GM23248 (cell line): ENCODE measurements at regions of chr2 and their contacts with region 1.

Region 1: DNA sequence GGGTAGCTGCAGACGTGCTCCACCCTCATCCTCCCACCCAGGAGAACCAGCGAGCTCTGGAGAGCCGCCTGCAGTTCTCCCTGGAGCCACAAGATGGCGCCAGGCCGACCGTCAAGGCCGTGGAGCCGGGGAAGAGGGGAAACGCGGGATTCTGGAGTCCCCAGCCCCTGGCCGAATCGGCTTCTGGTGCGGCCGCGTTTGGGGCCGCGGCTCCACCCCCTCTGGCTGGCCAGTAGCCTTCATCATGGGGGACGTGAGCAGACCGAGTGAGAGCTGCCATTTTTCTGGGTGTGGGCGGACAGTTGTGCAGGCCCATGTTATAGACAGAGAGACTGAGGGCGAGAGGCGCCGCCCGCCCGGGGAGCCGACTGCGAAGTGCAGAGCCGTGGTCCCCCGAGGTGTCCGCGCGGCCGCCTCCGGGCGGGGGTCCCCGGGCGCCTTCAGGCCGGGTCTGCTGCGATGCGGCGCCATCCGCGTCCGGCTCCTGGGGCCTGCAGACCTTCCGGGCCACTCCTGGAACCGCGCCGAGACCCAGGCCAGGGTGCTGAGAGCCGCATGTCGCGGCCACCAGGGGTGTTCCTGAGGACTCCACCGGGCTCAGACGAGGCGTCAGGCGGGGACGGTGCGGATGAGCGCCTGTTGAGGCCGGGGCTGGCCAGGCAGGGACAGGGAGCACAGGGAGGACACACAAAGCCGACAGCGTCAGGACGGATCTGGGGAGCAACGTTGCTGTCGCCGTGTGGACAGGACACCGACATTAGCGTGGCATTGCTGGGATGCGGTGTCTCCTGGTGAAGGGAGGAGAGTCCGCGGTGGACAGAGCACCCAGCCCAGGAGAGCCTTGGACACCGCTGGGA is 418.2 kb upstream of the HS6ST1 start:
- DNase-seq: peak; percentile 75
- H3K4me3 ChIP-seq: peak overlapping the region; percentile 55
- H3K27ac ChIP-seq: no peak overlapping the region
- H3K4me1 ChIP-seq: peaks cover 6% of the 10 kb centered on the region
- H3K27me3 ChIP-seq: no peaks in the 10 kb centered on the region; the same call in none of the 2 replicates

Region 2: DNA sequence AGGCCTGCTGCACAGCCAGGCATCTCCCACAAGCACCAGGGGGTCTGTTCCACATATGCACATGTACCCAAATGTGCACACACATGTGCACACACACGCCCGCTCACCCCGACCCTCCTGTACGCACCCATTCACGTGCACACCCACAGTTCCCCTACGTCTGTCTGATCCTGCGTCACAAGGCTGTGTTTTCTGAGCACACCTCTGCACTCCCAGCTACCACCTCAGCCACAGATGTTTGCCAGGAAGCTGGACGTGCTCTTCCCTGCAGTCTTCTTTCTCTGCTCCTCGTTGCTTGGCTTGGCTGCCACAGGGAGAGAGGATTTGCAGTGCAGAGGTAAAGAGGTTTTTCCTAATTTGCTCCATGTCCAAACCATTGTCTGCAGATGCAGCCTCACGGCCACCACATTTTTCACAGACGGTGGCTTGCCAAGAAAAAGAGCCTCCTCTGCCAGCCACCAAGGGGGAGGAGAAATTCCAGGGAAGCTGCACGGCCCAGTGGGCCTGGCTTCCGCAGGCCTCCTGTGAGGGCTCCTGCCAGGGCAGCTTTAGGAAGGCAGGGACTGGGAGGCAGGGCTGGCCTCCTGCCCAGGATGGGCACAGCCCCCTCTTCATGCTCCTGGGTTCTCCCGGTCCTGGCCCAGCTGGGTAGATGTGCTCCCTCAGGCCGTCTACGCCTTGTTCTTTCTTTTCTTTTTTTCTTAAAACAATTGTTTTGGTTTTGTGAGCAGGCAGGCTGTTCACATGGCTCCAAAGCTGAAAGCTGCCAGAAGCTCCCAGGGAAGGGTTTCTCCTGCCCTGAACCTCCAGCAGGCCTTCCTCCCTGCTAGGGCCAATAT is 389.0 kb before region 1 on chr2:
- in situ Hi-C with region 1: loop called (anchors 25 kb)
- DNase-seq: peak; percentile 71
- H3K4me3 ChIP-seq: no peak overlapping the region
- H3K27ac ChIP-seq: peak overlapping the region; percentile 62
- H3K4me1 ChIP-seq: peaks cover 16% of the 10 kb centered on the region
- H3K27me3 ChIP-seq: no peaks in the 10 kb centered on the region

Region 3: GRCh38 chr2:128531856-128532255 is 205.1 kb before region 1 on chr2:
- in situ Hi-C with region 1: no loop called
- DNase-seq: no peak
- H3K4me3 ChIP-seq: no peak overlapping the region
- H3K27ac ChIP-seq: no peak overlapping the region
- H3K4me1 ChIP-seq: peaks cover 23% of the 10 kb centered on the region
- H3K27me3 ChIP-seq: no peaks in the 10 kb centered on the region